AG04449 (cell line): ENCODE measurements at regions of chr1 and their contacts with region 1.

Region 1: DNA sequence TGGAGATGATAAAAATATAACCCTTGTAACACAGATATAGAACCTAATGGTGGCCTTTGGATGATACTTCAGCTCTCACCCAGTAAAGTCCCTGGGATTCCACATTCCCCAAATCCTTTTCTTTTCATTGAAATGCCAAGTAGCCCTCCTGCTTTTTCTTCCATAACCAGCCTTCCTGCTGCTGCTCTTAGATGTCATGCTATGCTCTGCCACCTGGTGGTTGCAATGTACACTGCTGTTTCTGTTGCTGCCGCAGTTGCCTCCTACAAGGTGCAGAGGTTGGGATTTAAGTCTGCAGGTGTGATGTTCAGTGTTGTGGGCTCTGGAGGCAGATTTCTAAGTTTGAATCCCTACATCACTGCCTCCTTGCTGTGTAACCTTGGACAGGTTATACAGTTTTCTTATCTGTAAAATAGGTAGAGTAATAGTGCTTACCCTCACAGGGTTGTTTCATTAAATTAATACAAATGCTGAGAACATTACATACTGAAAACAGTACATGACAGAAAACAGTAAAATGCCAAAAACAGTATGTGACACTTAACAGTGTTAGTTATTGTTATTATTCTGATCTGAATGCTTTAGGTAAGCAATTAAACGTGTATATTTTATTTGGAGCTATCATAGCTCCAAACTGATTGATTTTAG is 64.3 kb downstream of the CAMSAP2 start:
- DNase-seq: peak; percentile 38
- H3K4me3 ChIP-seq: no peak overlapping the region
- CTCF ChIP-seq: peak; percentile 92

Region 2: DNA sequence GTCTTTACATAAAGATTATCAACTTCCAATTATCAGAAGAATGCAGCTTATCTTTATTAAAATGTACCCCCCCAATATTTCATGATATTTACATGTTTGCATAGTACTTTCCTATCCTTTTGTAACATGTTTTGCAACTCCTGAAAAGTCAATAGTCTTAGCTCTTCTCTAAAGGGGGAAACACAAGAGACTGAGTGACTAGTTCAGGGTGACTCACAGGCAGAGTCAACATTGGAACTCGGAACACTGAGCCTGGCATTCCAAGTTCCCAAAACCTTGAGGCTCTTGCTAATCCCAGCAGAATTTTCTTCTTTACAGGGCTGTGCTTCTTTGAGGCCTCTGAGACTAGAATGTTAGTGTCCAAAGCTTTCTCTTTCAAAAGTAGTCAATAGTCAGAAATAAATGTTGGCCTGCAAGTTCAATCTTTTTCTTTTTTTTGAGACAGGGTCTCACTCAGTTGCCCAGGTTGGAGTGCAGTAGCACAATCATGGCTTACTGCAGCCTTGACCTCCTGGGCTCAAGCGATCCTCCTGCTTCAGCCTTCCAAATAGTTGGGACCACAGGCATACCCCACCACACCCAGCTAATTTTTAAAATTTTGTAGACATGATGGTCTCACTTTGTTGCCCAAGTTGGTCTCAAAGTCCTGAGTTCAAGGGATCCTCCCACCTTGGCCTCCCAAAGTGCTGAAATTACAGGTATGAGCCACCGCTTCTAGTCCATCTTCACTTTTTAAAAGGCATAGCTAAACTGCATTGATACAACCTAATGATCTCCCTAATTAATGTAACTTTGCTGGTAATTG is 430.7 kb before region 1 on chr1:
- CTCF ChIA-PET with region 1: no interaction called
- POLR2A ChIA-PET with region 1: no interaction called
- DNase-seq: peak; percentile 79
- H3K4me3 ChIP-seq: no peak overlapping the region
- CTCF ChIP-seq: no peak

Region 3: DNA sequence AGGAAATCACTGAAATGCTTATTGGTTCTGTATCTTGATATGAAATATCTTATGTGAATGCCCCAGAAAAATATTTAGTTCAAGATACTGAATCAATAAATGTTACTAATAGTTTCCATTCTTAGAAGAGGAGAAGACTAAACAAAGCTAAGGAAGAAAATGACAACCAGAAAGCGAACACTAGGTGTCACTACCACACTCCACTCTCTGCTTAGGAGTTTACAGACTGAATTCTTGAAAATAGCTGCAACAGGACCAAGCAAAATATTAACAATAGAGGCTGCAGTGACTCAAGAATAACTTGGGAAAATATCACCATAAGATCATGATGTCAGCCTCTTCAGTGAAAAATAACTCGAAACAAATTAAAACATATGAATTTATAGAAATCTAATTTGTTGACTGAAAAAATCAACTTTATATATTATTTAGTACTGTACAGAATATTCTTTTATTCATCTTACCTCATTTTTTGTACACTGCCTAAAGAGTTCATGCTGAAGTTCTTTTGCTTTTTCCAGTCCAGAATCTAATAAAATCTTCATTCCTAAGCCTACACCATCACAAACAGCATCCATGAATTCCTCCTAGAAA is 244.0 kb before region 1 on chr1:
- CTCF ChIA-PET with region 1: interaction called, 12 read pairs
- POLR2A ChIA-PET with region 1: no interaction called
- DNase-seq: peak; percentile 21
- H3K4me3 ChIP-seq: no peak overlapping the region
- CTCF ChIP-seq: peak; percentile 62

Region 4: DNA sequence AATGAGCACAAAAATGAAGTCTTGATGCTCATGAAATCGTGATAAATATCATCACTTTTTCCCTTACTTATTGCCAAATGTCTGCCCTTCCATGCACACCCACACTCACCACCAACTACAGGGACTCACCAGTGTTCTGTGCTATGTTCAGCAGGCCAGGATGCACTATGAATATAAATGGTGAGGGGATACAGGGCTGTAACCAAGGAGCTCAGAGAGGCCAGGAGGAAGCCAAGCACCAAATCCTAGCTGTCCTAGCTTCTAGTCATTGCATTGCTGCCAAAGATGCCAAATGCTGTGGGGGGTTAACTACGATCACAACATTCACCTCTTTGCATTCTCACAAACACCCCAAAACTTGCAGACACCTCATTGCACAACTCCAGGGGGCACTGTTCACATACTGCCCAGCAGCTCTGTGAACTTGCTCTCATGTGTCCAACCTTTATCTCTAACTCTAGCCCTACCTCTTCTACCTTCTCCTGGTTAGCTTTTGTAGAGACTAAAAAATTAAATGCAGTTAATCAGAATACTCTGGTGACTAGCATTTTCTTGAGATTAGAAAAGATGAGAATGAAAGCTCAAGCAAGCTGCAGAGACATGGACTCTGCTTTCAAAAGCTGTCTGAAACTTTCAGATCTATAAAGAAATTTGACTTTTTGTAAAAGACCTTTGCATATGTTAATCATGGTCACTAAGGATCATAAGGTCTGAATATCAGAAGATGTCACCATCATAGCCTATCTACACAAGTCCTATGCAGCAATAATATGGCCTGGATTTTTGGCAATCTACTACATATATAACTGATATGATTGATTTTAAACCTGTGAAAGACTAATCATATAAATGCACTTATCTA is 168.5 kb before region 1 on chr1:
- CTCF ChIA-PET with region 1: interaction called, 10 read pairs
- POLR2A ChIA-PET with region 1: no interaction called
- DNase-seq: no peak
- H3K4me3 ChIP-seq: no peak overlapping the region
- CTCF ChIP-seq: no peak

Region 5: GRCh38 chr1:200669314-200670241 is 133.4 kb before region 1 on chr1 and contains the start of gene DDX59:
- CTCF ChIA-PET with region 1: interaction called, 10 read pairs
- POLR2A ChIA-PET with region 1: no interaction called
- DNase-seq: peak; percentile 81
- H3K4me3 ChIP-seq: peak within 1 kb of the TSS; percentile 95
- CTCF ChIP-seq: no peak

Region 6: DNA sequence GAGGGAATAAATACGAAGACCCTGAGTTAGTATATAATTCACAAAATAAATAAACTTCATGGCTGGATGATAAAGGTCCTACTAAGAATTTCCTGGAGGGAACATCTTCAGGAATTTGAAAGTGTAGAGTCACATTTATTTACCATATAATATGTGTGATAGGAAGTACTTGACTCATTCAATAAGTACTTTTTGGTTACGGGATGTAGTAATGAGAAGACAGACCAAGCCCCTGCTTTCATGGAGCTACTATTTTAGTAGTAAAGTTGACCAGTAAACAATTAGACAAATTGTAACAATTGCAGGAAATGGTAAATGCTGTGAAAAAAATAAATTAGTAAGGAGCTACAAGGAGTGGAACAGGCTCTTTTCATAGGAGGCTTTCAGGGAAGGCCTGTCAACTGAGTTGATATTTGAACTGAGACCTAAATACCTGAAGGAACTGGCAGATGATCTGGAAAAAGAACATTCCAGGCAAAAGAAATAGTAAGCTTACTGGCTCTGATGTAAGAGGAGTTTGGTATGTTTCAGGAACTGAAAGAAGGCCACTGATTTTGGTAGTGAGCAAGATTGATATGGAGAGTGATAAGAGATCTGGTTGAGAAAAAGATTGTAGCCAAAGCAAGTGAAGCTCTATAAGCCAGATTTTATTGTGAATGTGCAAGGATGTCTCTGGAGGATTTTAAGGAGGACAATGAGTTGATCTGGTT is 28.1 kb before region 1 on chr1:
- CTCF ChIA-PET with region 1: interaction called, 14 read pairs
- POLR2A ChIA-PET with region 1: no interaction called
- DNase-seq: no peak
- H3K4me3 ChIP-seq: no peak overlapping the region
- CTCF ChIP-seq: no peak

Region 7: DNA sequence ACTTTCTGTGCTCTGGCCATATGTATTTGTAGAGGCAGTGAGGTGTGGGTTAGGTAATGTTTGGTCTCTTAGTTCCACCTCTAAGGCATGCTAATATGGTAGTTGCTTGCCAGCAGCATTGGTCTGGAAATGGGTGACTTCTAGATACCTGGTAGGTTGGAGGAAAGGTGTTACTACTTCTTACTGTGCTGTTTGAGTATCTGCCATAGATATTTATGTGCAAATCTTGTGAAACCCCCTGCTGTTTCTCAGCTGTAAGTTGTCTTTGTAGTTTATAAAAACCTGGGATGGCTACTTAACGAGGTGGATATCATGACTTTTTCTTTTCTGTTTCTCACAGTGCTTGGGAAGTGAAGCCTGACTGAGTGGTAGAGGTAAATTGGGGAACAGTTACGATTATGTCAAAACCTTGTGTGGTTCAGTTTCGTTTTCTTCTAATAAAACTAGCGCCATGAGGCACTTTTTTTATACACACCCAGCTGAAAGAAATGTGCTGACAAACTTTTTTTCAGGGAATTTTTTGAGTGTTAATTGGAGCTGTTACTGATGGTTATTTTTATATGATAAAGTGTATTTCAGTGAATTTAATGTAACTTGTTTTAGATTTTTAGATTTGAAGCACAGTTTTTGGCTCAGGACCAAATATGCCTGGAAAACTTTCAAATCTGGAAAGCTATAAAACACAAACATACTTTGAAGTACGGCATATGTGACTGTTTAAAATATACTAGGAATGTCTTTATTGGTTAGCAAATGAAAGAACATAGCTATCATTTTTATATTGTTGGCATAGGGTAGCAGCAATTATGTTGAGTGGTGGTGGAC is 22.2 kb before region 1 on chr1:
- CTCF ChIA-PET with region 1: interaction called, 15 read pairs
- POLR2A ChIA-PET with region 1: no interaction called
- DNase-seq: no peak
- H3K4me3 ChIP-seq: peak overlapping the region; percentile 38
- CTCF ChIP-seq: no peak

Region 8: GRCh38 chr1:200786788-200787187 is 16.2 kb before region 1 on chr1:
- CTCF ChIA-PET with region 1: interaction called, 66 read pairs
- POLR2A ChIA-PET with region 1: no interaction called
- DNase-seq: no peak
- H3K4me3 ChIP-seq: no peak overlapping the region
- CTCF ChIP-seq: no peak